ENCODE measurements at regions of chr6 and their contacts with region 1.

Region 1: GRCh38 chr6:29964887-29965562 is 22.7 kb downstream of the HLA-A start:
- DNase-seq: peak; percentile 90
- ATAC-seq: peak; percentile 85
- H3K4me3 ChIP-seq: peak overlapping the region; percentile 27; the same call in 1 of the 2 replicates
- H3K27ac ChIP-seq: peak overlapping the region; percentile 74
- H3K4me1 ChIP-seq: peaks cover 45% of the 10 kb centered on the region
- H3K27me3 ChIP-seq: no peaks in the 10 kb centered on the region
- CTCF ChIP-seq: no peak

Region 2: DNA sequence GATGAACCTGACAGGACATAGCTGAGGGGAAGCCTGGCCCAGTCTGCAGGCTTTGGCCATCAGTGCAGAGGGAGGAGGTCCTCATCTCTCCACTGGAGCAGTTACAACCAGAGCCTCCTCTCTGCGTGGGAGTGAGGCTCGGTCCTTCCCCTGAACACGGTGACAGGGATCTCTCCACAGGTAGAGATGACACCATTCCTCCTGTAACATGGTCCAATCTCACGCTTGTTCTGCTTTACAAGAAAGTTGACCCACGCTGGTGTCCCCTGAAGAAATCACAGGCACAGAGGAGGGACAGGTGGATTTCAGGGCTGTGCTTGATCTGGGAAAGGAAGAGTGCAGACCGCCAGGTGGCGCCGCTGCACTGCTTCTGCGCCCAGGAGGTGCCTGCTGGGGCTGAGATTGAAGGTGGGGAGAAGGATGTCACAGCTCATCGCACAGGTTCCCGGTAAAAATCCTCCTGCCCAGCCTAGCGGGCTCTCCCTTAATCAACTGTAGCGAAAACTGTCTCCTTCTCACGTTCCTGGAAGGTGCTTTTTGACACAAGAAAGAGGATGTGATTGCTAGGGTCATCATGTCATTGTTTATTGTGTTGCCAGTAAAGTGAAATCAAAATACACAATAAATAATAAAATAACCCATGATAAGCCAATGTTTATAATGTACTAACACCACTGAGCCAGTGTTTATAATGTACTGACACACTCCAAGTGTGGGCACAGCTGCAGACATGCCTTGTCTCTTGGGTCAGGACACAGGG is 117.0 kb before region 1 on chr6:
- CTCF ChIA-PET with region 1: no interaction called
- POLR2A ChIA-PET with region 1: no interaction called
- intact Hi-C with region 1: loop called (anchors 5 kb)
- DNase-seq: peak; percentile 80
- ATAC-seq: peak; percentile 90
- H3K4me3 ChIP-seq: no peak overlapping the region
- H3K27ac ChIP-seq: no peak overlapping the region
- H3K4me1 ChIP-seq: no peaks in the 10 kb centered on the region
- H3K27me3 ChIP-seq: no peaks in the 10 kb centered on the region
- CTCF ChIP-seq: peak; percentile 95

Region 3: DNA sequence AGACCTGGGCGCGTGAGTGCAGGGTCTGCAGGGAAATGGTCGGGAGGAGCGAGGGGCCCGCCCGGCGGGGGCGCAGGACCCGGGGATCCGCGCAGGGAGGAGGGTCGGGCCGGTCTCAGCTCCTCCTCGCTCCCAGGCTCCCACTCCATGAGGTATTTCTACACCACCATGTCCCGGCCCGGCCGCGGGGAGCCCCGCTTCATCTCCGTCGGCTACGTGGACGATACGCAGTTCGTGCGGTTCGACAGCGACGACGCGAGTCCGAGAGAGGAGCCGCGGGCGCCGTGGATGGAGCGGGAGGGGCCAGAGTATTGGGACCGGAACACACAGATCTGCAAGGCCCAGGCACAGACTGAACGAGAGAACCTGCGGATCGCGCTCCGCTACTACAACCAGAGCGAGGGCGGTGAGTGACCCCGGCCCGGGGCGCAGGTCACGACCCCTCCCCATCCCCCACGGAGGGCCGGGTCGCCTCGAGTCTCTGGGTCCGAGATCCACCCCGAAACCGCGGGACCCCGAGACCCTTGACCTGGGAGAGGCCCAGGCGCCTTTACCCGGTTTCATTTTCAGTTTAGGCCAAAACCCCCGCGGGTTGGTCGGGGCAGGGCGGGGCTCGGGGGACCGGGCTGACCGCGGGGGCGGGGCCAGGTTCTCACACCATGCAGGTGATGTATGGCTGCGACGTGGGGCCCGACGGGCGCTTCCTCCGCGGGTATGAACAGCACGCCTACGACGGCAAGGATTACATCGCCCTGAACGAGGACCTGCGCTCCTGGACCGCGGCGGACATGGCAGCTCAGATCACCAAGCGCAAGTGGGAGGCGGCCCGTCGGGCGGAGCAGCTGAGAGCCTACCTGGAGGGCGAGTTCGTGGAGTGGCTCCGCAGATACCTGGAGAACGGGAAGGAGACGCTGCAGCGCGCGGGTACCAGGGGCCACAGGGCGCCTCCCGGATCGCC is 76.9 kb before region 1 on chr6:
- CTCF ChIA-PET with region 1: no interaction called
- POLR2A ChIA-PET with region 1: no interaction called
- intact Hi-C with region 1: no loop called
- DNase-seq: peak; percentile 25
- ATAC-seq: peak; percentile 77
- H3K4me3 ChIP-seq: peak overlapping the region; percentile 67
- H3K27ac ChIP-seq: no peak overlapping the region
- H3K4me1 ChIP-seq: no peaks in the 10 kb centered on the region
- H3K27me3 ChIP-seq: no peaks in the 10 kb centered on the region
- CTCF ChIP-seq: no peak

Region 4: DNA sequence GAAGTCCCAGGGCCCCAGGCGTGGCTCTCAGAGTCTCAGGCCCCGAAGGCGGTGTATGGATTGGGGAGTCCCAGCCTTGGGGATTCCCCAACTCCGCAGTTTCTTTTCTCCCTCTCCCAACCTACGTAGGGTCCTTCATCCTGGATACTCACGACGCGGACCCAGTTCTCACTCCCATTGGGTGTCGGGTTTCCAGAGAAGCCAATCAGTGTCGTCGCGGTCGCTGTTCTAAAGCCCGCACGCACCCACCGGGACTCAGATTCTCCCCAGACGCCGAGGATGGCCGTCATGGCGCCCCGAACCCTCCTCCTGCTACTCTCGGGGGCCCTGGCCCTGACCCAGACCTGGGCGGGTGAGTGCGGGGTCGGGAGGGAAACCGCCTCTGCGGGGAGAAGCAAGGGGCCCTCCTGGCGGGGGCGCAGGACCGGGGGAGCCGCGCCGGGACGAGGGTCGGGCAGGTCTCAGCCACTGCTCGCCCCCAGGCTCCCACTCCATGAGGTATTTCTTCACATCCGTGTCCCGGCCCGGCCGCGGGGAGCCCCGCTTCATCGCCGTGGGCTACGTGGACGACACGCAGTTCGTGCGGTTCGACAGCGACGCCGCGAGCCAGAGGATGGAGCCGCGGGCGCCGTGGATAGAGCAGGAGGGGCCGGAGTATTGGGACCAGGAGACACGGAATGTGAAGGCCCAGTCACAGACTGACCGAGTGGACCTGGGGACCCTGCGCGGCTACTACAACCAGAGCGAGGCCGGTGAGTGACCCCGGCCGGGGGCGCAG is 22.6 kb before region 1 on chr6 and contains the start of gene HLA-A:
- CTCF ChIA-PET with region 1: no interaction called
- POLR2A ChIA-PET with region 1: no interaction called
- intact Hi-C with region 1: loop called (anchors 2 kb)
- DNase-seq: peak; percentile 95
- ATAC-seq: peak; percentile 97
- H3K4me3 ChIP-seq: peak within 1 kb of the TSS; percentile 87
- H3K27ac ChIP-seq: peak within 1 kb of the TSS; percentile 19; the same call in 1 of the 2 replicates
- H3K4me1 ChIP-seq: 0 out of 2 replicates have a peak, but pooled peaks cover 14% of the 10 kb centered on the region
- H3K27me3 ChIP-seq: no peaks in the 10 kb centered on the region
- CTCF ChIP-seq: no peak; the same call in 1 of the 2 replicates
- total RNA-seq, gene HLA-A: 426 and 435 TPM in 2 replicates

Region 5: DNA sequence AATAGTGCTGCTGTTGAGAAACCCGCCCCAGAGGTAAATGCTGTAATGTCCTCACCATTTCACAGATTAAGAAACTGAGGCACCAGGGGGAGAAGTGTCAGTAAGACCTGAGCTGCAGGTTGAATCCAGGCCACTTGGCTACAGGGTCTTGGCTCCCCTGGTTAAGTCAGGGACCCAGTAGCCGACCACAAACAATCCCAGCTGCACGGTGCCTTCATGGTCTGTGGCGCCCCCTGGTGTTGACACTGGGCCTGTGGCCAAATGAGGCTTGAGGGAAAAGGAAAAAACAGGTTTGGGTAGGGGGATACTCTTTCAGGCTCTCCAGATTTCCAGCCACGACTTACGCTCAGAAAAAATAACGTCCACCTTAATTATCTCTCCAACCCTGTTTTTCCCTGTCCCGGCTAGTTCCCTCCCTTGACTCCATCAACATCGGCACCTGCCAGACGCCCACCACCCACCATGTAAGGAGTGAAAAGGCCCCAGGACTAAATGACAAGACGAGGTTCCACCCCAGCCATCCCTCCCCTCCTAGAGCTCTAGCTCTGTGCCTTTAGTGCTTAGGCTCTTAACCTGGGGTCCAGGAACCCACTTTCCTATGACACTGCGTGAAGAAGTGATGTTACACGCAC is 48.4 kb after region 1 on chr6:
- CTCF ChIA-PET with region 1: no interaction called
- POLR2A ChIA-PET with region 1: no interaction called
- intact Hi-C with region 1: loop called (anchors 10 kb)
- DNase-seq: peak; percentile 34
- ATAC-seq: no peak; the same call in 1 of the 2 replicates
- H3K4me3 ChIP-seq: no peak overlapping the region
- H3K27ac ChIP-seq: no peak overlapping the region
- H3K4me1 ChIP-seq: no peaks in the 10 kb centered on the region
- H3K27me3 ChIP-seq: no peaks in the 10 kb centered on the region
- CTCF ChIP-seq: peak; percentile 90

Region 6: GRCh38 chr6:30101444-30102413 is 136.7 kb after region 1 on chr6:
- CTCF ChIA-PET with region 1: no interaction called
- POLR2A ChIA-PET with region 1: no interaction called
- intact Hi-C with region 1: no loop called
- DNase-seq: peak; percentile 93
- ATAC-seq: peak; percentile 81
- H3K4me3 ChIP-seq: peak overlapping the region; percentile 75
- H3K27ac ChIP-seq: no peak overlapping the region
- H3K4me1 ChIP-seq: peaks cover 31% of the 10 kb centered on the region
- H3K27me3 ChIP-seq: no peaks in the 10 kb centered on the region
- CTCF ChIP-seq: peak; percentile 37; the same call in 1 of the 2 replicates

Region 7: DNA sequence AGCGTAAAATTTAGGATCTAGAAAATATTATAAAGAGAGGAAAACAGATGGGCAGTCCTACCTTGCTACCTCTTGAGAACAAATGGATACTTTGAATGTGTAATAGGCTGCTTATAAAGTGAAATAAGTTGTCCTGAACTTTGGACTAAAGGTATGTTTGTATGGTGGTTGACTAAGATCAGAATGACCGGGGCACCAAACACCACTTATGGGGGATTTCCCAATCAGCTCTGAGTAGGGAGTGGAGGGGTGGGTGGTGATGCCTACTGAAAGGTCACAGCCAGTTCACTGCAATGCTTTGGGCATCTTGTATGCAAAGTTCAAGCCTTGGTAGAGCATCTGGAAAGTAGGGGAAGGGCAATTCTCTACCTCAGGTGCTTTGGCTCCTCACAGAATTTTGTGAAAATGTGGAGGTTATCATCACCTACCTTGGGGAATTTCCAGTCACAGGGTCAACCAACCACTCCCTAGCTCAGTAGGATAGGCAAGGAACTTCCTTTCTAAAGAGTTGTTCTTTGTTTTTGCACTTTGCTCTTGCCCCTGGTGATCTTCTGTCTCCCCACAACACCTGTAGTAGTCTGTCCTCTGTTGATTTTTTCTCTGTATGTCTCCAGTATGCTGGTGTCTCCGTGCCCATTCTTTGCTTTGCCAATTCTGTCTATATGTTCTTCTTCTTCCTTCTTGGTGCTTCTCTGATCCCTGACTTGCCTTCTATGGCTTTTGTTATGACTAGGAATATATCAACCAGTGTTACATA is 148.2 kb after region 1 on chr6 and contains the start of gene TRIM31:
- CTCF ChIA-PET with region 1: interaction called, 10 read pairs
- POLR2A ChIA-PET with region 1: no interaction called
- intact Hi-C with region 1: no loop called
- DNase-seq: peak; percentile 8
- ATAC-seq: no peak
- H3K4me3 ChIP-seq: no peak within 1 kb of the TSS
- H3K27ac ChIP-seq: no peak within 1 kb of the TSS
- H3K4me1 ChIP-seq: peaks cover 8% of the 10 kb centered on the region; the same call in 1 of the 2 replicates
- H3K27me3 ChIP-seq: no peaks in the 10 kb centered on the region
- CTCF ChIP-seq: no peak
- total RNA-seq, gene TRIM31: 0.11 and 0.52 TPM in 2 replicates

Measured in PC-3 (cell line).